ENCODE measurements at regions of chr15 and their contacts with region 1.

Region 1: GRCh38 chr15:66504563-66505429 is at the starts of genes RPL4 and ZWILCH:
- DNase-seq: peak; percentile 86
- H3K4me3 ChIP-seq: peak within 1 kb of the TSS; percentile 93 to 98 (median 98)
- H3K27ac ChIP-seq: peak within 1 kb of the TSS; percentile 96
- H3K4me1 ChIP-seq: peaks cover 28% of the 10 kb centered on the region
- H3K27me3 ChIP-seq: no peaks in the 10 kb centered on the region
- CTCF ChIP-seq: no peak
- POLR2A ChIP-seq: peak; percentile 79
- total RNA-seq, gene RPL4: 2,534 and 2,598 TPM in 2 replicates
- total RNA-seq, gene ZWILCH: 28.8 and 29.8 TPM in 2 replicates

Region 2: GRCh38 chr15:66566963-66567531 is 62.3 kb after region 1 on chr15:
- CTCF ChIA-PET with region 1: interaction called, 3 read pairs
- POLR2A ChIA-PET with region 1: no interaction called
- dilution Hi-C with region 1: no loop called
- intact Hi-C with region 1: loop called (anchors 2 kb)
- DNase-seq: peak; percentile 67
- H3K4me3 ChIP-seq: no peak overlapping the region
- H3K27ac ChIP-seq: no peak overlapping the region
- H3K4me1 ChIP-seq: no peaks in the 10 kb centered on the region
- H3K27me3 ChIP-seq: no peaks in the 10 kb centered on the region
- CTCF ChIP-seq: peak; percentile 66 to 70
- POLR2A ChIP-seq: no peak

Region 3: DNA sequence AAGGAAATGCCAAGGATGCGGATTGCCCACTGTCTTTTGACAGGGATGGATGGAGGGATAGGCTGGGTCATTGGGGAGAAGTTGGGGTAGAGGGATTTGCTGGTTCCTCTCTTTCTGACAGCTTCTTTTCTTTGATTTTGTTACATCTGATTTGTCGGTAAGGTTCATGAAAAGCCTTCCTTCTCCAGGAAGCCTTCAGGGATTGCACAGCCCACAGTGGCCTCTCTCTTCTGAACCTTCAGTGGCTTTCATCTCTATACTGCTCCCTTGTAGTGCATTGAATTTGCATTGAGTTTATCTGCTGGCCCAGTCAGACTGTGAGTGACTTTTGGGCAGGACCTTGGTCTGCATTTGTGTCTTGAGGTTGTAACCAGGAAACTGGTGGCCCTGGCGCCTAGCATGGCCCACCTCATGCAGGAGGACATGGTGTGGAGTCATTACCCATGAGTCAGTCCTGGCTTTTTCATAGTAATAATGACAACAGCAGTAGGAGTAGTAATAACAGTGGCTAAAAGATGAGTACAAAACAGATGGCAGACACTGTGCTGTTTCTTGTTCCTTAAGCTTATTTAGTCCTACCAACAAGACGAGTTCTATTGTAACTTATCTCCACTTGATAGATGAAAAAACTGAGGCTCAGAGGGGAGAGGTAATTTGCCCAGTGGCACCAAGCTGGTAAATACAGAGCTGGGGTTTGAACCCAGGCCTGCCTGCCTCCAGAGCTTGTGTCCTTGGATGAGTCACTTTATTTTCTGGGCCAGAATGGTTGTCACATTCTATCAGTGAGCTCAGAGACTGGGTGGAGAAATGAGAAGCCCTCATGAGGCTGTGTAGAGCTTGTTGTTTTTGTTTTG is 225.6 kb after region 1 on chr15:
- CTCF ChIA-PET with region 1: no interaction called
- POLR2A ChIA-PET with region 1: no interaction called
- dilution Hi-C with region 1: no loop called
- intact Hi-C with region 1: no loop called
- DNase-seq: peak; percentile 47
- H3K4me3 ChIP-seq: no peak overlapping the region
- H3K27ac ChIP-seq: peak overlapping the region; percentile 62
- H3K4me1 ChIP-seq: peaks cover 38% of the 10 kb centered on the region
- H3K27me3 ChIP-seq: no peaks in the 10 kb centered on the region
- CTCF ChIP-seq: no peak
- POLR2A ChIP-seq: no peak

Region 4: GRCh38 chr15:67832031-67832551 is 1327.3 kb after region 1 on chr15:
- CTCF ChIA-PET with region 1: no interaction called
- POLR2A ChIA-PET with region 1: no interaction called
- dilution Hi-C with region 1: no loop called
- intact Hi-C with region 1: no loop called
- DNase-seq: no peak
- H3K4me3 ChIP-seq: no peak overlapping the region
- H3K27ac ChIP-seq: no peak overlapping the region
- H3K4me1 ChIP-seq: peaks cover 32% of the 10 kb centered on the region
- H3K27me3 ChIP-seq: peaks cover 75 to 94% of the 10 kb centered on the region in 2 experiments
- CTCF ChIP-seq: peak in 1 of 2 donors; percentile 31
- POLR2A ChIP-seq: no peak

Measured in endothelial cell of umbilical vein (primary cell).